WTC11 (cell line): ENCODE measurements at regions of chr11 and their contacts with region 1.

Region 1: GRCh38 chr11:44315947-44316658 is 6.2 kb upstream of the ALX4 start:
- DNase-seq: no peak
- ATAC-seq: no peak
- H3K4me3 Mint-ChIP-seq: peak overlapping the region; percentile 61
- H3K27ac Mint-ChIP-seq: no peak overlapping the region
- H3K4me1 Mint-ChIP-seq: peaks cover 63% of the 10 kb centered on the region
- H3K27me3 Mint-ChIP-seq: peaks cover 100% of the 10 kb centered on the region
- CTCF ChIP-seq: no peak

Region 2: DNA sequence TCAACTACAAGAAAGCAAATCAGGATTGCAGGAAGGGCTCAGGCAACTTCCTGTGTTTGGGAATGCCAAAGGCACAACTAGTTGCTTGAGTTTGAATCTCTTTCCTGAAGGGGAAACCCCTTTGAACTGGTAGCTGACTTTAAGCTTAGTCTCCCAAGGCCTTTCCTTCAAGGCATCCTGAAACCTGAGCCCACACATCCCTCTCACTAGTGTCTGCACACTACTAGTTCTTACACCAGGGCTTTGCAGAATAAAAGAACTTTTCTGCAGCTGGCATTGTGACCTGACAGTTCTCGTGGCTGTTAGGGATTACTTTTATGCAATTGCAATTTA is 125.3 kb before region 1 on chr11:
- CTCF ChIA-PET with region 1: no interaction called
- POLR2A ChIA-PET with region 1: no interaction called
- DNase-seq: no peak
- ATAC-seq: peak; percentile 71
- H3K4me3 Mint-ChIP-seq: no peak overlapping the region
- H3K27ac Mint-ChIP-seq: peak overlapping the region; percentile 93
- H3K4me1 Mint-ChIP-seq: peaks cover 27% of the 10 kb centered on the region
- H3K27me3 Mint-ChIP-seq: no peaks in the 10 kb centered on the region; the same call in 1 of the 2 replicates
- CTCF ChIP-seq: no peak

Region 3: DNA sequence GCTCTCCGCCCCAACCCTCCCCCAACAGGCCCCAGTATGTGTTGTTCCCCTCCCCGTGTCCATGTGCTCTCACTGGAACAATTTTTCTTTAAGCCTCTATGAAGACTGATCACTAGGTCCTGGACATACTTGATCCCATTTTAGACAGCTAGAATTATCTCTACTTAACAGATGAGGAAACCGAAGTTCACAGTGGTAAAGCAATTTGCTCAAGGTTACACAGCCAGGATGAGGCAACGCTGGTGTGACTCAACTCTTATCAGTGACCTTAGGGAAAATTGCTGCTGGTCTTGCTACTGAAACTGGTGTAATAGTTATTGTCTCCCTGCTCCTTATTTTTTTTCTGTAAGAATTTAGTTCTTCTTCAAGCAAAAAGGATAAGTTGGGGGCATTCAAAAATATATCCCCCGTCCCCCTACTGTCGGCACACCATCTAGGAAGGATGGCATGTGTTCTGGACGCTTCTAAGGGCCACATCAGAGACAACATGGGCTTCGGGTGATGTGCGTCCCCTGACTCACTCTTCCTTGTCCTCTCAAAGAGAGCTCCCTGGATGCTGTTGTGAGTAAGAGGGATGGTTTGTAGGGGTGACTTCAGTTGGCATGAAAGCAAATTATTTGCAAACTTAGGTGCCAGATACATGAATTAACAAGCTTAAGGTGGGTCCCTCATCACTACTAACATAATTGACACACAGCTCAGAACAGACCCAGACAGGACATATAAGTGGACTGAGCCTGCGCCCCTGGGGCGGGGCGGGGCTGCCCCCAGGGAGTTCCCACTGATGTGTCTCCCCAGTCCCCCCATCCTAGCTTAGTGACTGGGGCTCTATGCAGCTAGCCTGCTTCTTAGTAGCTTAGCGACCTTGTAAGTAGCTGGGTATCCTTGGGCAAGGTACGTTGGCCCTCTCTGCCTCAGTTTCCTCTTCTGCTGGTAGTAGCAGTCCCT is 17.4 kb after region 1 on chr11:
- CTCF ChIA-PET with region 1: interaction called, 10 read pairs
- POLR2A ChIA-PET with region 1: interaction called, 5 read pairs
- DNase-seq: no peak
- ATAC-seq: no peak
- H3K4me3 Mint-ChIP-seq: no peak overlapping the region
- H3K27ac Mint-ChIP-seq: no peak overlapping the region
- H3K4me1 Mint-ChIP-seq: peaks cover 29% of the 10 kb centered on the region
- H3K27me3 Mint-ChIP-seq: peaks cover 96% of the 10 kb centered on the region
- CTCF ChIP-seq: no peak

Region 4: DNA sequence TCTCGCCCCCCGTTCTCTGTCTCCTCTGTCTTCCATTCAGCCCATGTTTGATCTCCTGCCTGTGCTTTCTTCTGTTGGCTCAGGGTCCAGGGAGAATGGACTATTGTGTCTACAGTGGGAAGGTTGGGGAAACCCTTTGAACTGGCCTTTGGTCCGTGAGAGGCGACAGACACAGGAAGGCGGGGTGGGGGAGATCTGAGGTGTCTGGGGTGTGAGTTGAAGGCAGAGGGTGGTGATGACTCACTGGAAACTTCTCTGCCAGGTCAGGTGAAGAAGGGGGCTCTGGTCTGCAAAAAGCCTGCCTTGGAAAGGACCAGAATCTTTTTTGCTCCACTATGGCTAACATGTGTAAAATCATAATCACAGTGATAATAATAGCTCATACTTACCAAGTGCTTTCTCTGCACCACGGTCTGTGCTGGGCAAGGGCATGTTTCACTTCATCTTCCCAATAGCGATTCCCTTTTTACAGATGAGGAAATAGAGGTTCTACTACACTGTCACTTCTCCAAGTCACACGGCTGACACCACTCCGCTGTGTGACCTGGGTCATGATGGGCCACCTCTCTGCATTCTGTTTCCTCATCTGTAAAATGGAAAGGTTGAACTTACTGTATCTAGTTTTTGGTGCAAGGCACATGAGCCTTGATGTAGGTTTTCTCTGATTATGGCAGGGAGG is 93.6 kb after region 1 on chr11:
- CTCF ChIA-PET with region 1: no interaction called
- POLR2A ChIA-PET with region 1: no interaction called
- DNase-seq: no peak
- ATAC-seq: no peak
- H3K4me3 Mint-ChIP-seq: no peak overlapping the region
- H3K27ac Mint-ChIP-seq: no peak overlapping the region
- H3K4me1 Mint-ChIP-seq: no peaks in the 10 kb centered on the region
- H3K27me3 Mint-ChIP-seq: peaks cover 15% of the 10 kb centered on the region
- CTCF ChIP-seq: no peak

Region 5: DNA sequence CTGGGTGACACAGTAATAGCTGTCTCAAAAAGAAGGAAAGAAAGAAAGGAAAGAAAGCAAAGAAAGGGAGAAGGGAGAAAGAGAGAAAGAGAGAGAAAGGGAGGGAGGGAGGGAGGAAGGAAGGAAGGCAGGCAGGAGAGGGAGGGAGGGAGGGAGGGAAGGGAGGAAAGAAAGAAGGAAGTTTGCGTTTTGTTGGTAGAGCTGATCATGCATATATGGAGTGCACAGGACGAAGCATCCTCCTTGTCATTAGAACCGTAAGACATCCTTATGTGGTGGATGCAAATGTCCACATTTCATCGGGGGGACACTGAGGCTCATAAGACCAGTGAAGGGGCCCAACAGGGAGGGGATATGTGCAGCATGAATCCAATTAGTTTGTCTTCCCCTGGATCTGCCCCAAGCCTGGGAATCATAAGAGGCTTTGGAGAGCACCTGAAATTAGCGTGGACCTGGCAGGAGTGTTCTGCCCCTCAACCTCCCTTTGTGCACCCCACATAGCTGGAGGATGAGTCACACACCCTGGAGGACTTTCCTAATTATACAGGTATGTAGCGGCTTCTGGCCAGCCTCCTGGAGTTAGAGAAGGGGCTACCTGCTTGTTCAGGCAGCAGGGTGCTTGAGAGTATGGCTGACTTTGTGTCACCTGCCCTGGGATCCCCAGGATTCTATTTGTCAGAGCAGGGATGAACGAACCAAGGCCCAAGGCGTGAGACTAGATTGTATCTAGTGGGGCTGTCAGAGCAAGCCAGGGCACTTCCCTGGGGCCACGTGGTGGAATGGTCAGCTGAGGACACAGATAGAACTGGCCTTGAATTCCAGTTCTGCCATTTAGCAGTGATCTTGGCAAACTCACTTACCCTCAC is 129.6 kb after region 1 on chr11:
- CTCF ChIA-PET with region 1: no interaction called
- POLR2A ChIA-PET with region 1: no interaction called
- DNase-seq: peak; percentile 39
- ATAC-seq: peak; percentile 76
- H3K4me3 Mint-ChIP-seq: no peak overlapping the region
- H3K27ac Mint-ChIP-seq: no peak overlapping the region
- H3K4me1 Mint-ChIP-seq: peaks cover 16% of the 10 kb centered on the region
- H3K27me3 Mint-ChIP-seq: peaks cover 5% of the 10 kb centered on the region
- CTCF ChIP-seq: no peak